Activated CD4-positive, alpha-beta memory T cell treated with anti-CD3 and anti-CD28 coated beads for 36 hours (primary cell): ENCODE measurements at regions of chr1 and their contacts with region 1.

Region 1: DNA sequence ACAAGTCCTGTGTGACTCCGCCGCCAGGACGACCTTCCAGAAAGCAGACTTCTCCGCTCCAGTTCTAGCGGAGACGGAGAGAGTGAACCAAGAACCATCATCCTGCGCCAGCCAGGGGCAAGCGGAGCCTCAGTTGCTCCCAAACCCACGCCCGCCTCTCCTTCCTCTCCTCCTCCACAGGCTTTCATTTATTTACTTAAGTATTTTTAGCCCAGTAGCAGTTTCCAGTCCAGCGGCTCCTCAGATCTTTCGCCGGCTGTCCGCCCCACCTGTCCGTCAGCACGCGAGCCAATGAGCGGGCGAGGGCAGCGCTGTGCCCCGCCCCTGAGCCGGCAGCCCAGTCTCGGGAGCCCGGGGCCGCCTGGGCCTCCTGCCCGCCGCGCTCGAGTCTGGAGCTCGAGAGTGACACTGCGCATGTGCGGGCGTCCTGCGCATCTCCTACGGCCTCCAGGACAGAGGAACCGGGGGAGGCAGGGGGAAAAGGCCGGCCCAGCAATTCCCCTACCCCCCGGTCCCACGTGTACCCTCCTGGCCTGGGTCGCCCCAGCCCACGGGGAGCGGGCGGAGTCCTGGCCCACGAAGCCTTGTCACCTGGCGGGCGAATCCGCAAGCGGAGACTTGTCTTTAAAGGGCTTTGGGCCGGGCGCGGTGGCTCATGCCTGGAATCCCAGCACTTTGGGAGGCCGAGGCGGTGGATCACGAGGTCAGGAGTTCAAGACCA is at the start of gene FALEC:
- DNase-seq: peak; percentile 94
- H3K4me3 Mint-ChIP-seq: peak within 1 kb of the TSS; percentile 83
- H3K27ac Mint-ChIP-seq: peak within 1 kb of the TSS; percentile 33
- H3K4me1 Mint-ChIP-seq: peaks cover 11% of the 10 kb centered on the region
- H3K27me3 Mint-ChIP-seq: no peaks in the 10 kb centered on the region
- total RNA-seq, gene FALEC: not detected

Region 2: DNA sequence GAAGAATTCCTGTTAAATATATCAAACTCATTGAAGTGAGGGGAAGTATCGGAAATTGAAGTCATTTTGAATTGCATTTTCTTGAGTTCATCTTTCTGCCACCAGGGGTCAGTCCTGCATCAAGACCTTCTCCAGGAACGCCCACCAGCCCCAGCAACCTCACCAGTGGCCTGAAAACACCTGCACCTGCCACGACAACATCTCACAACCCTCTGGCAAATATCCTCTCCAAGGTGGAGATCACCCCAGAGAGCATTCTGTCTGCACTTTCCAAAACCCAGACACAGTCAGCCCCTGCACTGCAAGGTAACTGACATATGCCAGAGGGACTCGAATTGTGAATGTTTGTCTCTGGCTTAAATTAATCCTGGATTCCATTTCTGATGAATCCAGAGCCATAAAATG is 51.1 kb before region 1 on chr1:
- CTCF ChIA-PET with region 1: interaction called, 9 read pairs
- POLR2A ChIA-PET with region 1: no interaction called
- intact Hi-C with region 1: loop called (anchors 5 kb)
- DNase-seq: peak; percentile 76
- H3K4me3 Mint-ChIP-seq: no peak overlapping the region
- H3K27ac Mint-ChIP-seq: peak overlapping the region; percentile 11
- H3K4me1 Mint-ChIP-seq: peaks cover 4% of the 10 kb centered on the region
- H3K27me3 Mint-ChIP-seq: no peaks in the 10 kb centered on the region

Region 3: DNA sequence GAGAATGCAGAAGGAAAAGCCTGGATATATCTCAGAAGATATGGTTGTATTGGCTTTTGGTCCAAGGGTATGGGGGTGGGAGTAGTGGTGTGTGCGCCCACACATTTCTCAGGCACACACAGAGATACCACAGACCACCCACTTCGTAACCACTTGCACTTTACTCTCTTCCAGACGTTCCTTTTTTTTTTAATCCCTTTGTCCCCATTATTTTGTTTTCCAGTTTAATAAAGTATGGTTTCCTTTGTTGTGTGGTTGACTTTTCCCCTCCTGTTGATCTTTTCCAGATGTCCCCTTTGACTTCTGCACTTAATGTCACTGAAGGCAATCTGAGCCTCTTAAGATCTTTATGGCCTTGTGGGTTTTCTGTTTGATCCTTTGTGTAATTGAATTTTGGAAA is 38.7 kb before region 1 on chr1:
- CTCF ChIA-PET with region 1: no interaction called
- POLR2A ChIA-PET with region 1: no interaction called
- intact Hi-C with region 1: no loop called
- DNase-seq: no peak
- H3K4me3 Mint-ChIP-seq: no peak overlapping the region
- H3K27ac Mint-ChIP-seq: no peak overlapping the region
- H3K4me1 Mint-ChIP-seq: peaks cover 11% of the 10 kb centered on the region
- H3K27me3 Mint-ChIP-seq: no peaks in the 10 kb centered on the region

Region 4: GRCh38 chr1:150486964-150487762 is 28.3 kb before region 1 on chr1 and contains the start of gene TARS2:
- CTCF ChIA-PET with region 1: no interaction called
- POLR2A ChIA-PET with region 1: interaction called, 3 read pairs
- intact Hi-C with region 1: loop called (anchors 1 kb)
- DNase-seq: peak; percentile 98
- H3K4me3 Mint-ChIP-seq: peak within 1 kb of the TSS; percentile 83
- H3K27ac Mint-ChIP-seq: peak within 1 kb of the TSS; percentile 90
- H3K4me1 Mint-ChIP-seq: peaks cover 21% of the 10 kb centered on the region
- H3K27me3 Mint-ChIP-seq: no peaks in the 10 kb centered on the region
- total RNA-seq, gene TARS2: 46.3 to 51.7 TPM

Region 5: GRCh38 chr1:150532868-150533302 is 17.4 kb after region 1 on chr1:
- CTCF ChIA-PET with region 1: interaction called, 32 read pairs
- POLR2A ChIA-PET with region 1: no interaction called
- intact Hi-C with region 1: loop called (anchors 2 kb)
- DNase-seq: no peak
- H3K4me3 Mint-ChIP-seq: no peak overlapping the region
- H3K27ac Mint-ChIP-seq: no peak overlapping the region
- H3K4me1 Mint-ChIP-seq: no peaks in the 10 kb centered on the region
- H3K27me3 Mint-ChIP-seq: no peaks in the 10 kb centered on the region

Region 6: GRCh38 chr1:151175910-151176309 is 660.4 kb after region 1 on chr1 and contains the start of gene TMOD4:
- CTCF ChIA-PET with region 1: no interaction called
- POLR2A ChIA-PET with region 1: no interaction called
- intact Hi-C with region 1: no loop called
- DNase-seq: no peak
- H3K4me3 Mint-ChIP-seq: no peak within 1 kb of the TSS
- H3K27ac Mint-ChIP-seq: peak within 1 kb of the TSS; percentile 55
- H3K4me1 Mint-ChIP-seq: no peaks in the 10 kb centered on the region
- H3K27me3 Mint-ChIP-seq: no peaks in the 10 kb centered on the region
- total RNA-seq, gene TMOD4: 1.7 to 2.7 TPM